HepG2 (cell line): ENCODE measurements at regions of chr17 and their contacts with region 1.

Region 1: DNA sequence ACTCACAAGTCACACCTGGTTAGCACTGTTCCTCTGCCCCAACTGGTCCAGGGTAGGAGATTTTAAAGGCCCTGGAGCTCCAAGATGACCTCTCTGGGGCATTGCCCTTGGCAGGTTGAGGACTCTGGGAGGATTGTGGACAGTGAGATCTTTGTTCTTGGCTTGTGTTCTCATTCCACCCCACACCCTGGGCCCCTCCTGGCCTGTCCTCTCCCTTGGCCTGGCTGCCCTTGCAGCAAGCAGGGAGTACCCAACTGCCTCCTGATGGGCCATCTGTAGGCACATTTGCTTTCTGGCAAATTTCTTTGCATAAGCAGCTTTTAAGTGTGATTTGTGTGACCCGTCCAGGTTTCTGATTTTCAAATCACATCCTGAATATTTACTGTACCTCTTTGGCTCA is 239.6 kb downstream of the UTP18 start:
- DNase-seq: no peak
- ATAC-seq: peak; percentile 73
- H3K4me3 ChIP-seq: no peak overlapping the region
- H3K27ac ChIP-seq: no peak overlapping the region
- H3K4me1 ChIP-seq: peaks cover 5% of the 10 kb centered on the region; the same call in 1 of the 2 replicates
- H3K27me3 ChIP-seq: no peaks in the 10 kb centered on the region
- CTCF ChIP-seq: no peak
- EP300 ChIP-seq: no peak
- POLR2A ChIP-seq: no peak
- RAD21 ChIP-seq: no peak

Region 2: GRCh38 chr17:50783193-50783660 is 716.7 kb before region 1 on chr17:
- CTCF ChIA-PET with region 1: no interaction called
- POLR2A ChIA-PET with region 1: no interaction called
- in situ Hi-C with region 1: no loop called
- intact Hi-C with region 1: no loop called
- DNase-seq: peak; percentile 86
- ATAC-seq: peak; percentile 97
- H3K4me3 ChIP-seq: no peak overlapping the region
- H3K27ac ChIP-seq: no peak overlapping the region
- H3K4me1 ChIP-seq: peaks cover 23% of the 10 kb centered on the region
- H3K27me3 ChIP-seq: peaks cover 0 to 2% of the 10 kb centered on the region in 2 experiments; a peak in 1 of 5 replicates
- CTCF ChIP-seq: peak; percentile 99
- EP300 ChIP-seq: peak; percentile 16 to 45; a peak in 1 of 4 replicates
- POLR2A ChIP-seq: no peak
- RAD21 ChIP-seq: peak; percentile 99

Region 3: DNA sequence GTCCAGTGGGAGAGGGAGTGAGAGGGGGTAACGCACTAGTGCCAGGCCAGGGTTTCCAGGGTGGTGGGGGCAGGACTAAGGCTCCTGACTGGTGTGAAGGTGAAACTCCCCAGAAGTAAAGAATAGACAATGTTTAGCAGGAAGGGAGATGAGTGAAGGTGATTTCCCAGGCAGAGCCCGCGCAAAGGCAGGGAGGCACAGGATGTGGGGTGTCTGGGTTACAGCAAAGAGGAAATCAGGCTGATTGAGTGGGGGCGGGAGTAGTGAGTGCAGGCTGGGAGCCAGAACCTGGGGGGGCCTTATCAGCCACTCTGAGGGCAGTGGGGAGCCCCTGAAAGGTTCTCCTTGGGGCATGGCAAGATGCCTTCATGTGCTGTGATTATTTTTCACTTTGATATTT is 72.0 kb before region 1 on chr17:
- CTCF ChIA-PET with region 1: no interaction called
- POLR2A ChIA-PET with region 1: no interaction called
- in situ Hi-C with region 1: loop called (anchors 10 kb)
- intact Hi-C with region 1: no loop called
- DNase-seq: no peak
- ATAC-seq: no peak
- H3K4me3 ChIP-seq: no peak overlapping the region
- H3K27ac ChIP-seq: no peak overlapping the region
- H3K4me1 ChIP-seq: no peaks in the 10 kb centered on the region
- H3K27me3 ChIP-seq: no peaks in the 10 kb centered on the region
- CTCF ChIP-seq: no peak
- EP300 ChIP-seq: no peak
- POLR2A ChIP-seq: no peak
- RAD21 ChIP-seq: no peak

Region 4: GRCh38 chr17:51555153-51555552 is 55.3 kb after region 1 on chr17:
- CTCF ChIA-PET with region 1: no interaction called
- POLR2A ChIA-PET with region 1: no interaction called
- in situ Hi-C with region 1: loop called (anchors 10 kb)
- intact Hi-C with region 1: no loop called
- DNase-seq: no peak
- ATAC-seq: no peak
- H3K4me3 ChIP-seq: no peak overlapping the region
- H3K27ac ChIP-seq: no peak overlapping the region
- H3K4me1 ChIP-seq: peaks cover 7% of the 10 kb centered on the region; the same call in 1 of the 2 replicates
- H3K27me3 ChIP-seq: no peaks in the 10 kb centered on the region
- CTCF ChIP-seq: no peak
- EP300 ChIP-seq: no peak
- POLR2A ChIP-seq: no peak
- RAD21 ChIP-seq: no peak

Region 5: DNA sequence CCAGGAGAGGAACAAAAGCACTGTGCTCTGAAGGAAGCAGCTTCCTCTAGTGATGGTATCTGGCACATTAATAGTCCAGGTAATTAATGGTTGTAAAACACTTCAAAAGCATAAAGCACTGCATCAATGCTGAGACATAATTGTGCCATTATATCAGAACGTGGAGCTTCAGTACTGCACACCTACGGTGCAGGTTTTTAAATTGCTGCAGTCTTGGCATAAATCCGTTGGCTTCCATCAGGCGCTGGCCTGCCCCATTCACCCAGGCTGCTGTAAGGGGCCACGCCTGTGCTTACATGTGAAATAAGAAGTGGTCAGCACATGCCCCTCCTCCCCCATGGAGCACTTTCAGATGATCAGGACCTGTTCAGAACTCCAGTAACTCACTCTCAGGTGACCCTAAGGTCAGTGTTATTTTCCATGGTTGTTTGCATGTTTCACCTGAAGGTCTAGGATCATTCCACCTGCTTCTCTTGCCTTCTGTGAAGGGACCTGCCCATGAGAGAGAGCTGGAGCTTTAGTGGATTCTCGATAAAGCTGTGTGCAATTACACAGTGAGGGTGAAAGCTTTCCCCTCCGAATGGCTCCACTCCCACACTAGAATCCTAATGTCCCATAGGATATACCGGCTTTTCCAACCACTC is 313.4 kb after region 1 on chr17:
- CTCF ChIA-PET with region 1: no interaction called
- POLR2A ChIA-PET with region 1: no interaction called
- in situ Hi-C with region 1: no loop called
- intact Hi-C with region 1: no loop called
- DNase-seq: no peak
- ATAC-seq: no peak
- H3K4me3 ChIP-seq: no peak overlapping the region
- H3K27ac ChIP-seq: no peak overlapping the region
- H3K4me1 ChIP-seq: no peaks in the 10 kb centered on the region
- H3K27me3 ChIP-seq: no peaks in the 10 kb centered on the region
- CTCF ChIP-seq: no peak
- EP300 ChIP-seq: no peak
- POLR2A ChIP-seq: no peak
- RAD21 ChIP-seq: no peak